Upper lobe of right lung (tissue), 1 donor: ENCODE measurements at regions of chr20 and their contacts with region 1.

Region 1: DNA sequence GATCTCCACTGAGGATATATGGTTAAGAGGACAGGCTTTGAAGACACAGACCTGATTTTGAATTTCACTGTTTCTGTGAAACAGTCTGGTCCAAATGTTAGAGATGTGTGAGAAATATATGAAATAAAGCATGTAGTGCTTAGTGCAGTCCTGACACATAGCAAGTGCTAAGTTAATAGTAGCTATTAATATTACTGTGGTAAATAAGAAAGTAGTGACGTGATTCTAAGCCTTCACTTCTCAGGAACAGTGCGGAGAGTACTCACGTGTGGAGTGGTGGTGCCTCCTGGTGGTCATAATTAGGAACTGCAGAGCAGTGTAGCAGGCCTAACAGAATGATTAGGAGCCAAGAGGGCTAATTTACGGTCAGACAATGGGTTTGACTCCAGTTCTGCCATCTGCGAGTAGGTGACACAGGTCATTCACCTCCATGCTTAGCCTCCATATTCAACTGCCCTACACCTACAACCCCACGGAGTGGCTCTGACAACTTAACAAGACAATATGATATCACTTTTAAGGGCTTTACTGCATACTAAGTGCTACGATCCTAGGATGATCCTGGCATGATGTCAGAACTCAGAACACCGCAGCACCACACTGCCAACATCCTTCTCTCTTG is 106.2 kb downstream of the JPH2 start:
- DNase-seq: no peak
- ATAC-seq: peak; percentile 96
- H3K4me3 ChIP-seq: no peak overlapping the region
- H3K27ac ChIP-seq: no peak overlapping the region
- H3K4me1 ChIP-seq: no peaks in the 10 kb centered on the region
- H3K27me3 ChIP-seq: no peaks in the 10 kb centered on the region
- CTCF ChIP-seq: peak; percentile 100

Region 2: DNA sequence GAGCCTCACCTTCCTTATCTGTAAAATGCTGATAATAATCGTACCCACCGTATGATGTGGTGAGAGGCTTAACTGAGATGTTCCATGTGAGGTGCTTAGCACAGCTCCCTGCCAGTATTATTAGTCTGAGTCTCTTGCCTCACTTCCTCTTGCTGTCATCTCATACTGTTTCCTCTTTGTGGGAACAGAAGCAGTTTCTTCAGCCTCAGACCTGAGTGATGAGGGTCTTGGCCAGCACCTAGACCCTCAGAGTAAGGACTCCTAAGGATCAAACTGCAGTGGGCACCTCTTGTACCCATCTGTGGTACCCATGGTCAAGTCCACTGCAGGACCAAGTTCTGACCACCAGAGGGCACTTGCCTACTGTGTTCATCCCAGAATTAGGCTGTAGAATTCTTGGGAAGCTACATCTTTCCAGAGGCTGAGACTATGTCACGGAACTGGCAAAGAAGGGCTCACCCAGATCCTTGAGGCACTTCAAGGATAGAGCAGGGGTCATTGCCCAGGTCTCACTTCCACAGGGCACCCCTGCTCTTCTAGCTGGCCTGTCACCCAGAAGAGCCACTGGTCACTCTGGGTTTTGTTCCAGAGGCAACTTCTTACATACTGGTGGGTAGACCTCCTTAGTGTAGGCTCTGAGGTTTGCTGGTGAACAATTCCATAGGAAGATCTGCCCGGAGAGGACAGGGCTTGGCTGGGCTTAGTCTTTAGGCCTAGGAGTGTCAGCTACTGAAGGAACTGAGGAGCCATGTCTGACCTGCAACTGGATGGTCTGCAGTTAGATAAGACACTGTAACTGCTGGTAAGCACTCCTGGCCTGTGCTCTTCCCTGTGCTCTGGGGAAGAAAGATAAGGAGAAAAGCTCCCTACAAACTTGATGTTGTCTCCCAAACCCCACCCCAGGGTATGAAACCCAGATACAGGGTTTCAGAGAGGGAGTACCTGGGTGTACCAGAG is 542.6 kb before region 1 on chr20:
- intact Hi-C with region 1: loop called (anchors 5 kb)
- DNase-seq: peak; percentile 71
- ATAC-seq: peak; percentile 80
- H3K4me3 ChIP-seq: no peak overlapping the region
- H3K27ac ChIP-seq: no peak overlapping the region
- H3K4me1 ChIP-seq: no peaks in the 10 kb centered on the region
- H3K27me3 ChIP-seq: no peaks in the 10 kb centered on the region
- CTCF ChIP-seq: peak; percentile 94

Region 3: DNA sequence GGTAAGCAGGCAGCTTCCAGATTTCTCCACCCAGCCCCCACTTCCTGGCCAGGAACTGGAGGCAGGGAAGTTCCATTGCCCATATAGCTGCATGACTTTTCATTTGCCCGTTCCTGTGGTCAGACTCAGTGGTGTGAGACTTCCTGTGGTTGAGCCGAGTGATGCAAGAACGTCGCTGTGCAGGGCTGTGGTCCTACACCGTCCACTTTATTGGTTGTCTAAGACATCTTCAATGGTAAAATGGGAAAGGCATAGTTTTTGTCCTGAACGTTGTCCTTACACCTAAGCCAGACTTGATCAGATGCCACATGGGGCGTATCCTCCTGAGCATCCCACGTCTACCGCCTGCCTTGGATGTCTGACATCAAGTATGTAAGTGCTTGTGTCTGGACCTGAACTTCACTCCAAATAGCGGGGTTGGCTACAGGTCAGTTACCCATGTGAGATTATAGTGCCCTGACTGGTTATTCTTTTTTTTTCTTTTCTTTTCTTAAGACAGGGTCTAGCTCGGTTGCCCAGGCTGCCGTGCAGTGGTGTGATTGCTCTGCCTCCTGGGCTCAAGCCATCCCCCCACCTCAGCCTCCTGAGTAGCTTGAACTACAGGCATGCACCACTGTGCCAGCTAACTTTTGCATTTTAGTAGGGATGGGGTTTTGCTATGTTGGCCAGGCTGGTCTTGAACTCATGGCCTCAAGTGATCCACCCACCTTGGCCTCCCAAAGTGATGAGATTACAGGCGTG is 328.0 kb before region 1 on chr20:
- intact Hi-C with region 1: loop called (anchors 2 kb)
- DNase-seq: peak; percentile 67
- ATAC-seq: peak; percentile 82
- H3K4me3 ChIP-seq: no peak overlapping the region
- H3K27ac ChIP-seq: no peak overlapping the region
- H3K4me1 ChIP-seq: peaks cover 12% of the 10 kb centered on the region
- H3K27me3 ChIP-seq: peaks cover 13% of the 10 kb centered on the region
- CTCF ChIP-seq: no peak

Region 4: GRCh38 chr20:43839793-43840199 is 241.0 kb before region 1 on chr20:
- intact Hi-C with region 1: loop called (anchors 10 kb)
- DNase-seq: no peak
- ATAC-seq: no peak
- H3K4me3 ChIP-seq: no peak overlapping the region
- H3K27ac ChIP-seq: no peak overlapping the region
- H3K4me1 ChIP-seq: peaks cover 5% of the 10 kb centered on the region
- H3K27me3 ChIP-seq: no peaks in the 10 kb centered on the region
- CTCF ChIP-seq: no peak

Region 5: DNA sequence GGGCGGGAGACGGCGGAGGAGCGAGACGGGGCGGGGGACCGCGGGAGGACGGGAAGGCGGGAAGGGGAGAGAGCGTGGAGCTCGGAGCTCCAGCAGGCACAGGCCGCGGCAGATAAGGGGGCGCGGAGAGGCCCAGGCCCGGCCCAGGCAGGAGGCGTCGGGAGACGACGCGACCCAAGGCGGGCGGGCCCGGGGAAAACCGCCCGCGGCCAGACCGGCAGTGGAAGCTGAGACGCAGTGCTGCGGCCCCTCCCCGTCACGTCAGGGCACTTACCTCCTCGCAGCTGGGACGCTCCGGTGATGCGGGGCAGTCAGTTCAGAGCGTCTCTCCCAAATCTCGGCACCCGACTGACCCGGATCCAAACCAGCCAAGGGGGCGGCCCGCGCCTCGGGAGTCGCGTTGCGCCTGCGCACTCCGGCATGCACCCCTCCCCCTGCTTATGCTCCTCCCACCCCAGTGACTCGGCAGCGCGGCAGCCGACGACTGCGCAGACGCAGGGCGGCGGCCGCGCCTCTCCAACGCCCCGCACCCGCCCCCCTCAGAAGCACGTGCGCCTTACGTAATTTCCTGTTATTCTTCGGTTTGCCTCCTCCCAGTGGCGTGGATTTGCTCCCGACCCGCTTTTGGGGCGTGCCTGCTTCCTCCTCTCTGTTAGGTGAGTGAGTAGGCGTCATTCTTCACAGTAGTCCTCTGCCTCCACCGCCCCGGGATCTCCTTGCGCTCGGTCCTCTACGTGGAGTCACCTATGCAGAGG is 129.8 kb after region 1 on chr20 and contains the start of gene OSER1:
- intact Hi-C with region 1: no loop called
- DNase-seq: peak; percentile 98
- ATAC-seq: peak; percentile 96
- H3K4me3 ChIP-seq: peak within 1 kb of the TSS; percentile 77
- H3K27ac ChIP-seq: peak within 1 kb of the TSS; percentile 94
- H3K4me1 ChIP-seq: peaks cover 37% of the 10 kb centered on the region
- H3K27me3 ChIP-seq: no peaks in the 10 kb centered on the region
- CTCF ChIP-seq: no peak
- total RNA-seq, gene OSER1: 29.6 TPM